Naive thymus-derived CD4-positive, alpha-beta T cell (primary cell): ENCODE measurements at regions of chr4 and their contacts with region 1.

Region 1: DNA sequence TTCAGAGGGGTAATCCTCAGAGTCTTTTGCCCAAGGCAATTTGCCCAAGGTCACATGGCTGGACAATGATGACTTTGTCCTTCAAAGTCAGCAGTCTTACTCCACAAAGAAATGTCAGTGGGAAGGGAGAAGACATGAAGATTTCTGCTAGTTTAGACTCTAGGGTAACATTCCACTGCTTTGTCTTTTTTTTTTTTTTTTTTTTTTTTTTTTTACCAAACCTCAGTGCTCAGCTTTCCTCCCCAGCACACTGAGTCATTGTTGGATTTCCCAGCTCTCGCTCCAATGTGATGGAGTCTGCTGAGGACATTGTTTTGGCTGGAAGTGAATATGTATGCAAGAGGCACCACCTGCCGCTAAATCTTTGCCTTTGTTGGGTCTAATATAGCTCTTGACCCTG is 7.2 kb upstream of the C1QTNF7 start:
- DNase-seq: no peak
- ATAC-seq: no peak
- H3K4me3 ChIP-seq: no peak overlapping the region
- H3K4me3 Mint-ChIP-seq: no peak overlapping the region
- H3K27ac ChIP-seq: no peak overlapping the region
- H3K27ac Mint-ChIP-seq: no peak overlapping the region
- H3K4me1 ChIP-seq: no peaks in the 10 kb centered on the region
- H3K4me1 Mint-ChIP-seq: peaks cover 4 to 28% (median 16%) of the 10 kb centered on the region in 7 donors
- H3K27me3 ChIP-seq: no peaks in the 10 kb centered on the region
- H3K27me3 Mint-ChIP-seq: no peaks in the 10 kb centered on the region

Region 2: DNA sequence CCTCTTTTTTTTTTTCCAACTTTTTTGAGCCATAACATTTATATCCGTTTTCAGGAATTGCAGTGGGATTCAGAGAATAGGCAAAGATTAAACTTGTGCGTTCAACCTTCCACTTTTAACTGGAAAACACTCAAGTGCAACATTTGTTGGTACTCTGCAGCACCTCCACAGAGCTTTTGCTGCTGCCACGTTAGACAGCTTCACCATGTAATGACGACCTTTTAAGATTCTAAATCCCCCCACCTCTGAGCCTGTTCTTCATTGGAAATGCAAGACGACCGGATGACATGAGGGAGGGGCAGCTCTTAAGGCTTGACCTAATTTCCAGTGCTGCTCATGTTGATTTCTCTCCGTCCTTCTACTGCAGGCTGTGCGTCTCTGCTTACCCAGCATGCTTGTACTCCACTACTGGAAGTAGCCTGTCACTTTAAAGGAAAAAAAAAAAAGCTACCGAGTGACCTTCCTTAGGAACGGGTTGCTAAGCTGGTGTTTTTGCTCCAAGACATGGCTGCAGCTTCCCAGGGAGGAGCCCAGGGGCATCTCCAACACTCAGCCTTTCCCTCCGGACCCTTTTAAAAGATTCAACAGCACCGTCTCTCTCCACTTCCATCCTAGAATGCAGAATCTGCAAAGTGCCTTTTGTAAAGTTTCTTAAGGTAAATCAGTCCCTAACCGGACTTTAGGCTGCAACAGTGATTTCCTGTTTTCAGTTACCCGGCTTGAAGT is 48.9 kb after region 1 on chr4 and contains the start of gene CC2D2A:
- CTCF ChIA-PET with region 1: no interaction called
- POLR2A ChIA-PET with region 1: no interaction called
- intact Hi-C with region 1: loop called in 1 of 2 experiments (anchors 1 kb)
- DNase-seq: no peak
- ATAC-seq: peak; percentile 36
- H3K4me3 ChIP-seq: peak within 1 kb of the TSS; percentile 28
- H3K4me3 Mint-ChIP-seq: peak within 1 kb of the TSS in 9 of 10 donors; percentile 31 to 76 (median 70)
- H3K27ac ChIP-seq: no peak within 1 kb of the TSS
- H3K27ac Mint-ChIP-seq: peak within 1 kb of the TSS in 4 of 9 donors; percentile 29 to 79 (median 49)
- H3K4me1 ChIP-seq: peaks cover 0 to 10% of the 10 kb centered on the region in 2 donors
- H3K4me1 Mint-ChIP-seq: peaks cover 7 to 16% (median 11%) of the 10 kb centered on the region in 7 donors
- H3K27me3 ChIP-seq: no peaks in the 10 kb centered on the region
- H3K27me3 Mint-ChIP-seq: peaks cover 0 to 20% (median 0%) of the 10 kb centered on the region in 5 donors
- total RNA-seq, gene CC2D2A: 1.3 TPM in 1 of 5 experiments, not detected in the others